Endothelial cell of umbilical vein (primary cell): ENCODE measurements at regions of chr1 and their contacts with region 1.

Region 1: DNA sequence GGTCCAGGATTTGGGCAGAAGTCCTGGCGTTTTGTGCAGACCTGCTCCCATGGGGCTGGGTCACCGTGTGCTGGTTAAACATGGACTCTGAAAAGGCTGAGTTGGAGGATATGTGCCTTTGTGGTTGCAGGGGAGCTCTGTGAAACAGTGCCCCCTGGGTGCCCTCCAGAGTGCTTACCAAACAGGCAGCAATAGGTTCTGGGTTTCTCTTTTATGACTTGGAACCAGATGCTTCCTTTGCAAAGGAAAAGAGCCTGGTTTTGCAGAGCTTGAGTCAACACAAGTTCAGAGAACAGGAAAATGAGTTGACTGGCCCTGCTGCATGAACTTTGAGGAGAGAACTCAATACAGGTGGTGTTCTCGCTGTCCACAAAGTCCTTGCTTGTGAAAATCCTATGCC is 288.9 kb downstream of the TM2D1 start:
- DNase-seq: peak; percentile 98
- H3K4me3 ChIP-seq: no peak overlapping the region
- H3K27ac ChIP-seq: peak overlapping the region; percentile 94
- H3K4me1 ChIP-seq: peaks cover 42% of the 10 kb centered on the region
- H3K27me3 ChIP-seq: no peaks in the 10 kb centered on the region
- CTCF ChIP-seq: peak; percentile 80 to 81
- POLR2A ChIP-seq: peak; percentile 67

Region 2: GRCh38 chr1:60960891-60961461 is 475.0 kb before region 1 on chr1:
- CTCF ChIA-PET with region 1: no interaction called
- POLR2A ChIA-PET with region 1: no interaction called
- dilution Hi-C with region 1: no loop called
- intact Hi-C with region 1: loop called (anchors 5 kb)
- DNase-seq: peak; percentile 96
- H3K4me3 ChIP-seq: no peak overlapping the region
- H3K27ac ChIP-seq: peak overlapping the region; percentile 98
- H3K4me1 ChIP-seq: peaks cover 68% of the 10 kb centered on the region
- H3K27me3 ChIP-seq: no peaks in the 10 kb centered on the region
- CTCF ChIP-seq: no peak
- POLR2A ChIP-seq: no peak

Region 3: DNA sequence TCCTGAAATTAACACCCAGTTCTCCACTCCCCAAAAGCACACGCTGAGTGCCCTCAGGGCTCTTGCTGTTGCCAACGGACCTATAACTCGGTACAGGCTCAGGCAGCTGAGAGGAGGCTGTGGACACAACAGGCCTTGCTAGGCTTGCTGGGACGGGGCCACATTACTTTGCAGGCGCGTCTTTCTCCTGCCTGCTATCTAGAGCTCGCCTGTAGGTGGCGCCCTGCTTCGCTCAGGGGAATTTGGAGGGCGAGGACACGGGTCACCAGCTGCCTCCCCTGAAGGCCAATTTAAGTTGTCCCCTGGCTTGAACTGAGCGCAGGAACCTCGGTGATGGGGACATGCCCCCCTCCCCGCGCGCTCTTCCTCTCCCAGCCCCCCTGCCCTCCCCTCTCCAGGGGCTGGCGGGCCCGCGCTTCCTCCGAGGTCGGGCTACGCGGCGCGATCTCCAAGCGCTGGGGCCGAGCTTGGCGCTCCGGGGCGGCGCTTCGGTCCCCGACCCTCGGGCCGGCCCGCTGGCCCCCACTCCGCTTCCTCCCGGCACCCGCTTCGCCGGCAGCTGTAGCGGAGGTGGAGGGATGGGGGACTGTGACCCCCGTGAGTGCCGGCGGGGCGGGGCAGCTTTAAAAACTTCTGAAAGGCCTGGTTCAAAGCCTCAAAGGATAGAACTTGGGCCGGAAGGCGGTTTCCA is 386.0 kb before region 1 on chr1:
- CTCF ChIA-PET with region 1: interaction called, 18 read pairs
- POLR2A ChIA-PET with region 1: no interaction called
- dilution Hi-C with region 1: no loop called
- intact Hi-C with region 1: loop called (anchors 1 kb)
- DNase-seq: peak; percentile 93
- H3K4me3 ChIP-seq: peak overlapping the region; percentile 62 to 95 (median 92)
- H3K27ac ChIP-seq: peak overlapping the region; percentile 84
- H3K4me1 ChIP-seq: peaks cover 16% of the 10 kb centered on the region
- H3K27me3 ChIP-seq: no peaks in the 10 kb centered on the region
- CTCF ChIP-seq: peak; percentile 89 to 96
- POLR2A ChIP-seq: peak; percentile 40

Region 4: DNA sequence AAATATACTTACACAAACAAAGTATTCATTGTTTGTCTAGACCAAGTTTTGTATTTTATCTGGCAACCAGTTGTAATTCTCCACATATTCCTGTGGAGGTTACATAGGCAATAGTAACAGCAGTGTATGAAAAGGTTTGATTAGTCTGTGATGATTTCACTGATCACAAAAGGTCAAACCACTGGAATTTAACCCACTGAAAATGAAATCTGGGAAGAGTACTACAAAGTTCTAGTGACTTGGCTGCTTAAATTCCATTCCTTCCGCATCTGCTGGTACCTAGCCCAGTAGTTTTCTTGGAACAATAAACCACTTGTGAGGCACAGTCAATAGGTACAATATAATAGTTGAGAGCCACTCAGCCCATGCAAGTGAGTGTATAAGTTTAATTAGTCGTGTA is 148.3 kb before region 1 on chr1:
- CTCF ChIA-PET with region 1: no interaction called
- POLR2A ChIA-PET with region 1: no interaction called
- dilution Hi-C with region 1: no loop called
- intact Hi-C with region 1: loop called (anchors 1 kb)
- DNase-seq: peak; percentile 90
- H3K4me3 ChIP-seq: no peak overlapping the region
- H3K27ac ChIP-seq: peak overlapping the region; percentile 87
- H3K4me1 ChIP-seq: peaks cover 29% of the 10 kb centered on the region
- H3K27me3 ChIP-seq: no peaks in the 10 kb centered on the region
- CTCF ChIP-seq: no peak
- POLR2A ChIP-seq: no peak

Region 5: GRCh38 chr1:61388566-61388965 is 47.5 kb before region 1 on chr1:
- CTCF ChIA-PET with region 1: interaction called, 3 read pairs
- POLR2A ChIA-PET with region 1: no interaction called
- dilution Hi-C with region 1: no loop called
- intact Hi-C with region 1: loop called (anchors 5 kb)
- DNase-seq: peak; percentile 92
- H3K4me3 ChIP-seq: no peak overlapping the region
- H3K27ac ChIP-seq: peak overlapping the region; percentile 71
- H3K4me1 ChIP-seq: peaks cover 23% of the 10 kb centered on the region
- H3K27me3 ChIP-seq: no peaks in the 10 kb centered on the region
- CTCF ChIP-seq: no peak
- POLR2A ChIP-seq: no peak

Region 6: GRCh38 chr1:61424382-61424781 is 11.6 kb before region 1 on chr1:
- CTCF ChIA-PET with region 1: interaction called, 26 read pairs
- POLR2A ChIA-PET with region 1: no interaction called
- dilution Hi-C with region 1: no loop called
- intact Hi-C with region 1: no loop called
- DNase-seq: no peak
- H3K4me3 ChIP-seq: no peak overlapping the region
- H3K27ac ChIP-seq: no peak overlapping the region
- H3K4me1 ChIP-seq: peaks cover 22% of the 10 kb centered on the region
- H3K27me3 ChIP-seq: no peaks in the 10 kb centered on the region
- CTCF ChIP-seq: no peak
- POLR2A ChIP-seq: no peak